OCI-LY7 (cell line): ENCODE measurements at regions of chr19 and their contacts with region 1.

Region 1: DNA sequence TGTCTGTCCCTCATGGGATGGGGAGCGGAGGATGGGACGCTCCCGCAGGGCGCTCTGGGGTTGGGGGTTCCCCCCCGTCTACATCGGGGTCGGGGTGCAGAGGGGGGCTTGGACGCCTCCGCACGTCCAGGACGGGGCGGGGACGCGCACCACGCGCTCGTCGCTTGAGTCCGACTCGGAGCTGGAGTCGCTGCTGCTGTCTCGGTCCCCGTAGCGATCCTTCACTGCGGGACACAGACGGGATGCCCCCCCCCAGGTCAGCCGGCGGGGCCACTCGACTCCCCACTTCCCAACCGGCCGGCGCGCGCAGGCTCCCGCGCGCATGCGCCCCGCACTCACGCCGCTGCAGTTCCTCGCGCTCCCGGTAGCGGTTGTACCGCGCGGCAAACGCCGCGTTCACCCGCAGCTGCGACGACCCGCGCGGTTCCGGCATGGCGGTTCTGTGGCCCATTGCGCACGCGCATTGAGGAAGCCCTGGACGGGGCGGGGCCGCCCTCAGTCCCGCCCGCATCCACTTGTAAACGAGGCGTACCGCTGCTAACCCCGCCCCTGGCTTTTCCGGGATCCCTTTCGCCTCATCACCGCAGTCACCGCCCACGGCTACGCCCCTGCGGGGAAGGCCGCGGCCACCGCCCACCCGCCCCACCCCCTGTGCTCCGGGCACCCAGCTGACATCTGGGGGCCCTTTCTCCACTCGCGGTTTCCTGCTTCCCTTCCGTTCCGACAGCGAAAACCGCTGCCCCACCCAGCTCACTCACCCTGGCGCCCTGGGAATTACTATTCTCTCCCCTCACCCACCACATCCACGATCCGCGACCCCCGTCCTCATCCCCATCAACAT is at the start of gene KRI1:
- DNase-seq: peak; percentile 99
- H3K4me3 ChIP-seq: peak within 1 kb of the TSS; percentile 94
- H3K27ac ChIP-seq: peak within 1 kb of the TSS; percentile 81
- H3K4me1 ChIP-seq: peaks cover 33% of the 10 kb centered on the region
- CTCF ChIP-seq: peak; percentile 52
- total RNA-seq, gene KRI1: 44.9 and 53.6 TPM in 2 replicates

Region 2: GRCh38 chr19:10403137-10404021 is 162.4 kb before region 1 on chr19 and contains the start of gene CDC37:
- CTCF ChIA-PET with region 1: no interaction called
- POLR2A ChIA-PET with region 1: interaction called, 3 read pairs
- intact Hi-C with region 1: loop called (anchors 2 kb)
- DNase-seq: peak; percentile 98
- H3K4me3 ChIP-seq: peak within 1 kb of the TSS; percentile 83
- H3K27ac ChIP-seq: peak within 1 kb of the TSS; percentile 100
- H3K4me1 ChIP-seq: peaks cover 79% of the 10 kb centered on the region
- CTCF ChIP-seq: no peak
- total RNA-seq, gene CDC37: 332 and 345 TPM in 2 replicates

Region 3: GRCh38 chr19:10502524-10503001 is 63.2 kb before region 1 on chr19:
- CTCF ChIA-PET with region 1: no interaction called
- POLR2A ChIA-PET with region 1: interaction called, 3 read pairs
- intact Hi-C with region 1: loop called (anchors 1 kb)
- DNase-seq: peak; percentile 96
- H3K4me3 ChIP-seq: peak overlapping the region; percentile 86
- H3K27ac ChIP-seq: peak overlapping the region; percentile 75
- H3K4me1 ChIP-seq: peaks cover 17% of the 10 kb centered on the region
- CTCF ChIP-seq: 0 out of 2 replicates have a peak, but pooled peaks have one; percentile 5

Region 4: GRCh38 chr19:10553943-10554381 is 11.8 kb before region 1 on chr19:
- CTCF ChIA-PET with region 1: interaction called, 5 read pairs
- POLR2A ChIA-PET with region 1: interaction called, 4 read pairs
- intact Hi-C with region 1: loop called (anchors 1 kb)
- DNase-seq: peak; percentile 82
- H3K4me3 ChIP-seq: peak overlapping the region; percentile 19
- H3K27ac ChIP-seq: peak overlapping the region; percentile 88
- H3K4me1 ChIP-seq: peaks cover 38% of the 10 kb centered on the region
- CTCF ChIP-seq: no peak

Region 5: DNA sequence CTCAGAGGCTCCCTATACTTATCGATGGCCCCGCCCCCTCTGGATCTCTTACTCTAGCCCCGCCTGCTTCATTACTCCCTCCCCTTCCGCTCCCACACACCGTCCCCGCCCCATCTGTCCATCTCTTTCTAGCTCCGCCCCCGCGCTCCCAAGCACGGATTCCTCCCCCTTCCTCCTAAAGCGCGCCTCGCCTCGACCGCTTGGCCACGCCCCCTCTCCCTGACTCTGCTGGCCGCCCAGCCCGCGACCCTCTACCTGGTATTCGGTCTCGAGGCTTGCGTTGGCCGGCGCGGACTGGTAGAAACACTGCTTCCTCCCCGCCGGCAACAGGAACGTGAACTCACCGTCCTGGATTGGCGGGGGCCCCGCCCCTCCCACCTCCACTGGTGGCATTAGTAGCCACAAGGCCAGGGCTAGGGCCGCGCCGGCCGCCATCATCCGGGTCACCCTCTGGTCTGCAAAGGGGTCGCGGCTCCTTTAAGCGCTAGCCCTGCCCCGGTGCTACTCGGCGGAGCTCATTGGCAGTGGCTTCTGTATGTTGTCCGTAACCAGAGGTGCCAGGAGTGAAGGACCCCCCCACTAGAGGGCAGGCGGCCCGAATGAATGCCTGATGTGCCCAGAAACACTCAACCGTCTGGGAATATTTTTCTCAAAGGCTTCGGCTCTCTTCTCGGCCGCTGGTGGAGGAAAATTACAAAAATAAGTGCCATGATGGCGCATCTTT is 270.1 kb after region 1 on chr19 and contains the start of gene TMED1:
- CTCF ChIA-PET with region 1: no interaction called
- POLR2A ChIA-PET with region 1: no interaction called
- intact Hi-C with region 1: loop called (anchors 5 kb)
- DNase-seq: peak; percentile 100
- H3K4me3 ChIP-seq: peak within 1 kb of the TSS; percentile 74
- H3K27ac ChIP-seq: peak within 1 kb of the TSS; percentile 84
- H3K4me1 ChIP-seq: peaks cover 26% of the 10 kb centered on the region
- CTCF ChIP-seq: peak; percentile 39; the same call in 1 of the 2 replicates
- total RNA-seq, gene TMED1: 20.8 and 22.5 TPM in 2 replicates